AG04450 (cell line): ENCODE measurements at regions of chr12 and their contacts with region 1.

Region 1: DNA sequence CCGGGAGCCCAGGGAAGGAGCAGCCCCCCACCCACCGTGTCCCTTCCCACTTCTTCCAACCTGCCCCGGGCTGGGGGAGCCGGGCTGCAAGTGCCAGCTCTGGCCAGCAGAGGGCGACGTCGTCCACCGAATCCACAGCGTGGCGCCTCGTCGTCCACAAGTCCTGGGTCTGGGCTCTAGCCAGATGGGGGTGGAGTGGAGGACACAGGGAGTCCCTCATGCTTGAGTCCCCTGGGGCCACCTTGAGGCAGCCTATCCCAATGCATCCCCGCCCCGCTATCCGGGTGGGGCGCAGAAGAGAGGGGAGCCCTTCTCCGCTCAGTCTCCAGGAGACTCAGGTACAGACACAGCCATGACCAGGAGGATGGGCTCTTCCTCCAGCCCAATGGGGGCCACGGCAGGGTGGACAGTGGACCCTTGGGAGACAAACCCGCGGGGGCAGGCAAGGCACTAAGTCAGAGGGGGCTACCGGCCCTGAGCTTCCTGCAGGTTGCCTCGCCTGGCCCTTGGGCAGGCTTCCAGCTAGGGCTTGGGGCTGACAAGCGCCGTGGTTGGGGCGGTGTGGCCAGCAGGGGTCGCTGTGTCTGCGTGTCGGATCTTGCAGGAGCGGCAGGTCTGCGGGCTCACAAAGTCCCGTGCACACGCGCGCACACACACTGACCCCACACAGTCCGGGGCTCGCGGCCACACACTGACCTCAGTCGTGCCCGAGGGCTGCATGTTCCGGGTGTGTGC is 5.5 kb downstream of the AQP5 start:
- DNase-seq: peak; percentile 48
- H3K4me3 ChIP-seq: peak overlapping the region; percentile 54
- H3K27ac ChIP-seq: no peak overlapping the region
- H3K27me3 ChIP-seq: peaks cover 76% of the 10 kb centered on the region
- CTCF ChIP-seq: peak; percentile 81

Region 2: GRCh38 chr12:49776413-49776812 is 190.8 kb before region 1 on chr12:
- CTCF ChIA-PET with region 1: interaction called, 10 read pairs
- POLR2A ChIA-PET with region 1: no interaction called
- DNase-seq: peak; percentile 56
- H3K4me3 ChIP-seq: no peak overlapping the region
- H3K27ac ChIP-seq: no peak overlapping the region
- H3K27me3 ChIP-seq: peaks cover 3% of the 10 kb centered on the region
- CTCF ChIP-seq: peak; percentile 87

Region 3: GRCh38 chr12:49899286-49899843 is 67.8 kb before region 1 on chr12:
- CTCF ChIA-PET with region 1: no interaction called
- POLR2A ChIA-PET with region 1: no interaction called
- DNase-seq: no peak
- H3K4me3 ChIP-seq: no peak overlapping the region
- H3K27ac ChIP-seq: no peak overlapping the region
- H3K27me3 ChIP-seq: peaks cover 14% of the 10 kb centered on the region
- CTCF ChIP-seq: no peak

Region 4: GRCh38 chr12:49945394-49946080 is 21.7 kb before region 1 on chr12:
- CTCF ChIA-PET with region 1: interaction called, 24 read pairs
- POLR2A ChIA-PET with region 1: no interaction called
- DNase-seq: peak; percentile 21
- H3K4me3 ChIP-seq: peak overlapping the region; percentile 44
- H3K27ac ChIP-seq: no peak overlapping the region
- H3K27me3 ChIP-seq: peaks cover 13% of the 10 kb centered on the region
- CTCF ChIP-seq: peak; percentile 95

Region 5: GRCh38 chr12:50006789-50007436 is 39.7 kb after region 1 on chr12:
- CTCF ChIA-PET with region 1: interaction called, 11 read pairs
- POLR2A ChIA-PET with region 1: no interaction called
- DNase-seq: no peak
- H3K4me3 ChIP-seq: no peak overlapping the region
- H3K27ac ChIP-seq: no peak overlapping the region
- H3K27me3 ChIP-seq: no peaks in the 10 kb centered on the region
- CTCF ChIP-seq: no peak

Region 6: DNA sequence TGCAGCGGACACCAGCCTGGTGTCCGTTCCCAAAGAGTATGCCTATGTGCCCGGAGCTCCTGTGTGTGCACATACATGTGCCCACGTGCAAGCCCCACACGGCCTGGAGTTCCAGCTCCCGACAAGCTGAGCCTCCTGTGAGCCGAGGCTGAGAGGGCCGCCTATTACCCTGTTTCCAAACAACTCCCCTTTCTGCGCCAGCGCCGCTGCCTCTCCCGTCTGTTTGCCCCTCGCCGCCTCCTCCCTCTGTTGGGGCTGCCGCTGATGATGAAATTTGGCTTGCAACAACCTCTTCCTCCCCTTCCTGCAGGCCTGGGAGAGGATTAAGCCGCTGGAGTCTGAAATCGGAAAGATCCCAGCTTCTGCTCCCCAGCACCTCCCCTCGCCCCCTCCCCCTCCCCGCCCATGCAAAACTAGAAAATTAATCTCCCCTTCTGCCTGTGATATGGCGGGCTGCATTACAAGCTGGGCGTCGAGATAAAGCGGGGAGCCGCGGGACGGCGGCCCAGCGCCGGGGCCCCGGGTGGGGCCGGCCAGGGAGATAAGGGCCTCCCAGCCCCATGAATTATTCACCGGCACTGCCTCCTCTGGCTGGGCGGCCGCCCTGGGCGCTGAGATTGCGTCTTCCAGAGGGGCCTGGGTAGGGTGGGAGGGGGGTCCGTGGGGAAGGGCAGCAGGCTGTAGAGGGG is 83.3 kb after region 1 on chr12:
- CTCF ChIA-PET with region 1: interaction called, 89 read pairs
- POLR2A ChIA-PET with region 1: no interaction called
- DNase-seq: no peak
- H3K4me3 ChIP-seq: peak overlapping the region; percentile 36
- H3K27ac ChIP-seq: no peak overlapping the region
- H3K27me3 ChIP-seq: peaks cover 38% of the 10 kb centered on the region
- CTCF ChIP-seq: no peak

Region 7: DNA sequence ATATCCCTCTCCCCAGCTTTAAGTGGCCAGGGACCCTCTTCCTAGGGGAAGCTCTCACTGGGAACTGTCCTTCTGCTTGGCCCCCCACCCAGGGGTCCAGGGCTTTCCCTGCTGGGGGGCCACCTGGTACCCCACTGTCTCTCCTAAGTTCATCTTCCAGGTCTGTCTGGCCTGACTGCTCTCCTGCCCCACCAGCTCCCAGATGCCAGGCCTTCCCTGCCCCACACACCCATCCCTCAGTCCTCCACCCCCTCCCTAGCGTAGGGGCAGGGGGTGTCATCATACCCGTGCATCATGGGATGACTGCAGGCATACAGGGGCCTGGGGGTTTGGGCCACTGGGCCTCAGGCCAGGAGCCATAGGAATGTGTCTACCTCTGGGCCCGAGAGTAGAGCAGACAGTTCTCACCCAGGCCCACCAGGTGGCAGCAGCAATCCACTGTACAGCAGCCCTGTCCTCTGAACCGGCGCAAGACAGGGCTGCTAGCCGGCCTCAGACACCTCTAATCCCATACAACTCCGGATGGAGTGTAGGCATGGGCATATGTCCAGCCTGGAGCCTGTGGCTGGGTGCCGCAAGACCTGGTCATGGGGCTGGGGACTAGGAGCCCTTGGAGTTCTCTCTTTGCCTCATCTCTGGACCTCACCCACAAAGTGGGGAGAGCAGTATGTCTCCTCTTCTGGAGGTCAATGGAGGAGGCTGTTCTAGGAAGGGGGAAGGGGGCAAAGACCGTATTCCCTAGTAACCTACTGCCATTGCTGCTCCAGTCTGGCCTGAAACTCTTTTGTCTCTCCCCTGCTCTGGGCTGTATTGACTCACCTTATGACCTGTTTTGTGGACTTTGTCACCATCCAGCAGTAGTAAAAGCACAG is 108.0 kb after region 1 on chr12:
- CTCF ChIA-PET with region 1: interaction called, 290 read pairs
- POLR2A ChIA-PET with region 1: interaction called, 4 read pairs
- DNase-seq: no peak
- H3K4me3 ChIP-seq: no peak overlapping the region
- H3K27ac ChIP-seq: no peak overlapping the region
- H3K27me3 ChIP-seq: no peaks in the 10 kb centered on the region
- CTCF ChIP-seq: peak; percentile 91